ENCODE measurements at regions of chr11 and their contacts with region 1.

Region 1: DNA sequence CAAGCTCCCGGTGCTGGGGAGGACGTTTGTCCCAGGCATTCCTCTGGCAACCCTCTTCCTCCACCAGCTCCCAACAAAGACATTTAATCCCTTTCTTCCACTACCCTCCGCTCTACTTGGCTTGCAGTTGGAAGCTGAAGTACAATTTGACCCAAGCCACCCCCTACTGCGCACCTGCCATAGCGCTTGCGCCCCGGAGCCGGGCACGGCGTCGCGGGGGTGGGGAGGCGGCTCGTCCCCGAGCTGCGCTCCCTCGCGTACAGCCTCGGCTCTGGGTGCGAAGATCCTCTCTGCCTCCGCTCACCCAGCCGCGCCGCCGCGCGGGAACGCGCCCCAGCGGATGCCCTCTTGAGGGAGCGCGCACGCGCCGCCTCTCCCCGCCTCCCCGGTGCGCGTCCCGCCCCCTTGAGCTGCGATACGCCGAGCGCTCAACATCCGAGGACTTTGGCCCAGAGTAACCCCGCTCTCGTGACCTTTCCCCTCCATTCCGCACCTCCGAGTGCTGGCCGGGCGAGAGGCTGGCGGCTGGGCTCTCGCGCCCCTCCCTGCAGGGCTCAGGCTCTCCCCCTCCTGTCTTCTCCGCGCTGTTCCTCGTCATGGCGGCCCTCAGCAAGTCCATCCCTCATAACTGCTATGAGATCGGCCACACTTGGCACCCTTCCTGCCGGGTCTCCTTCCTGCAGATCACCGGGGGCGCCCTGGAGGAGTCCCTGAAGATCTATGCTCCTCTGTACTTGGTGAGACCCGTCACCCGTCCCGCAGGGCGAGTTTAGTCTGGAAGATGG is at the start of gene TMEM135:
- DNase-seq: peak; percentile 90
- ATAC-seq: peak; percentile 94
- H3K4me3 ChIP-seq: peak within 1 kb of the TSS; percentile 90 to 98
- H3K27ac ChIP-seq: peak within 1 kb of the TSS; percentile 87
- H3K4me1 ChIP-seq: peaks cover 21 to 30% of the 10 kb centered on the region in 2 experiments
- H3K27me3 ChIP-seq: no peaks in the 10 kb centered on the region
- CTCF ChIP-seq: no peak
- POLR2A ChIP-seq: peak; percentile 92
- RAD21 ChIP-seq: no peak
- total RNA-seq, gene TMEM135: 50.6 TPM

Region 2: GRCh38 chr11:86255896-86256295 is 781.7 kb before region 1 on chr11:
- CTCF ChIA-PET with region 1: no interaction called
- POLR2A ChIA-PET with region 1: no interaction called
- RAD21 ChIA-PET with region 1: no interaction called
- intact Hi-C with region 1: no loop called
- DNase-seq: no peak
- ATAC-seq: no peak
- H3K4me3 ChIP-seq: no peak overlapping the region
- H3K27ac ChIP-seq: no peak overlapping the region
- H3K4me1 ChIP-seq: no peaks in the 10 kb centered on the region
- H3K27me3 ChIP-seq: no peaks in the 10 kb centered on the region
- CTCF ChIP-seq: no peak
- POLR2A ChIP-seq: no peak
- RAD21 ChIP-seq: no peak

Region 3: GRCh38 chr11:86955361-86956120 is 82.1 kb before region 1 on chr11 and contains the start of gene FZD4:
- CTCF ChIA-PET with region 1: no interaction called
- POLR2A ChIA-PET with region 1: no interaction called
- RAD21 ChIA-PET with region 1: no interaction called
- intact Hi-C with region 1: loop called (anchors 5 kb)
- DNase-seq: peak; percentile 48
- ATAC-seq: peak; percentile 96
- H3K4me3 ChIP-seq: peak within 1 kb of the TSS; percentile 66 to 71
- H3K27ac ChIP-seq: peak within 1 kb of the TSS; percentile 60
- H3K4me1 ChIP-seq: peaks cover 3 to 19% of the 10 kb centered on the region in 2 experiments; a peak in 3 of 4 replicates
- H3K27me3 ChIP-seq: no peaks in the 10 kb centered on the region
- CTCF ChIP-seq: peak in 1 of 3 experiments; percentile 33; a peak in 1 of 6 replicates
- POLR2A ChIP-seq: no peak
- RAD21 ChIP-seq: peak; percentile 40; the same call in 1 of the 2 replicates
- total RNA-seq, gene FZD4: 4.4 TPM

Region 4: DNA sequence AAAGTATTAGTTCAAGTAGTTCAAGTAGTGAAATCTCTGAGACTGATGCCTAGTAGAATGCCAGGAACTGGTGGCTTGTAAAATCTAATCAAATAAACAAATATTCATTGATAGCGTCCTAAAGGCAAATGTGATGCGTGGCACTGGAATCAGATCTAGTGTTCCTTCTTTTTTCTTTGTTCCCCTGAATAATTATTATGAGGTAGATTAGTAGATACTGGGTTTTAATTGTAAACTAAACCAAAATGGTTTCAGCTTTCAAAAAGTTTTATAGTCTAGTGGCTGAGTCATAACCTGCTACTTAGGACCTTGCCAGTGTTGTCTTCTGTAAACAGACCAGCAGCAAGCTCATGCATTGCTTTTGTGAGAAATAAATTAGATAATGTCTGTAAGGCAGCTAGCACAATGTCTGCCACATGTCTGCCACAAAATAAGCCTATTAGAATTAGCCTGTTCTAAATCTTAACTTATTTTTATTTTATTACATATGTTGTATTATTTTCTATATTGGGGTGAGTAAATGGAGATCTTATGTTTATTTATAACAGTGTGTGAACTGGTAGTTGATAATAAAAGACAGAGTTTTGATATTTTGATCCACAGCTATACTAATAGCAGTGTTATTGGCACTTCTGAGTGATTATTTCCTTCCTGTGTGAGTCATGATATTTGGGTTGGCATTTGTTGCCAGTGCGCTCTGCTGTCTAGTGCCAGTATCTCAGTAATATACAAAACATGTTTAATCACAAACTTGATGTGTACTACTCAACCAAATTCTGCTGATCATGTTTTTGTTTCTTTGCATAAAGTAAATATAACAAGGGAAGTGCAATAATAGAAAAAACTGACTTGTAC is 135.8 kb after region 1 on chr11:
- CTCF ChIA-PET with region 1: no interaction called
- POLR2A ChIA-PET with region 1: no interaction called
- RAD21 ChIA-PET with region 1: no interaction called
- intact Hi-C with region 1: loop called (anchors 2 kb)
- DNase-seq: peak; percentile 56
- ATAC-seq: peak; percentile 80
- H3K4me3 ChIP-seq: no peak overlapping the region
- H3K27ac ChIP-seq: peak overlapping the region; percentile 49
- H3K4me1 ChIP-seq: peaks cover 41 to 47% of the 10 kb centered on the region in 2 experiments
- H3K27me3 ChIP-seq: no peaks in the 10 kb centered on the region
- CTCF ChIP-seq: no peak
- POLR2A ChIP-seq: no peak
- RAD21 ChIP-seq: no peak